ENCODE measurements at regions of chr7 and their contacts with region 1.

Region 1: DNA sequence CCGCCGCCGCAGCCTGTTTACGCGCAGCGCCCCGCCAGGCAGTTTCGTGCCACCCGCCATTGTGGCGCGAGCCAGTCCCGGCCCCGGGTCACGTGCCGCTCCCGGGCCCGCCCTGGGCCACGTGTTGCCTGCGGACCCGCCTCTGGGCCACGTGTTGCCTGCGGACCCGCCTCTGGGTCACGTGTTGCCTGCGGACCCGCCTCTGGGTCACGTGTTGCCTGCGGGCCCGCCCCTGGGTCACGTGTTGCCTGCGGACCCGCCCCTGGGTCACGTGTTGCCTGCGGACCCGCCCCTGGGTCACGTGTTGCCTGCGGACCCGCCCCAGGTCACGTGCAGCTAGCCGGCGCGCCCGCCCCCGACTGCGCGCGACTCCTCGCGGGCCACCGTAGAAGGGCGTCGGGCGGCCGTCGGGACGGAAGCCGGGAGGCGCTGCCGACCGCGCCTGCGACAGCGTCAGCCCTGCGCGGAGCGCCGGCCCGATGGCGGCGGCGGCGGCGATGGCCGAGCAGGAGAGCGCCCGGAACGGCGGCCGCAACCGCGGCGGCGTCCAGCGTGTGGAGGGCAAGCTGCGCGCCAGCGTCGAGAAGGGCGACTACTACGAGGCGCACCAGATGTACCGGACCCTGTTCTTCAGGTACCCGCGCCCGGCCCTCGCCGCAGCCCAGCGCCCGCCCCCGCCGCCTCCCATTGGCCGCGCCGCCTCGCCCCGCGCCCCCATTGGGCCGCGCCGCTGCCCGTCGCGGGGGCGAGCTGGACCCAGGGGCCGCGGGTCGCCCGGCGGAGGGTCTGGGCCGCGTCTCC is at the start of gene GET4:
- DNase-seq: peak; percentile 76 to 99
- H3K4me3 ChIP-seq: peak within 1 kb of the TSS; percentile 67
- H3K27ac ChIP-seq: peak within 1 kb of the TSS; percentile 49
- H3K4me1 ChIP-seq: peaks cover 20% of the 10 kb centered on the region
- H3K27me3 ChIP-seq: no peaks in the 10 kb centered on the region
- CTCF ChIP-seq: no peak
- total RNA-seq, gene GET4: 120 and 166 TPM in 2 replicates

Region 2: GRCh38 chr7:322111-322671 is 554.2 kb before region 1 on chr7:
- CTCF ChIA-PET with region 1: interaction called, 3 read pairs
- POLR2A ChIA-PET with region 1: interaction called, 3 read pairs
- intact Hi-C with region 1: loop called (anchors 5 kb)
- DNase-seq: peak; percentile 45 to 92
- H3K4me3 ChIP-seq: no peak overlapping the region
- H3K27ac ChIP-seq: no peak overlapping the region
- H3K4me1 ChIP-seq: peaks cover 20% of the 10 kb centered on the region
- H3K27me3 ChIP-seq: peaks cover 58% of the 10 kb centered on the region
- CTCF ChIP-seq: peak; percentile 83

Region 3: GRCh38 chr7:831596-832166 is 44.7 kb before region 1 on chr7:
- CTCF ChIA-PET with region 1: no interaction called
- POLR2A ChIA-PET with region 1: interaction called, 3 read pairs
- intact Hi-C with region 1: loop called (anchors 1 kb)
- DNase-seq: peak; percentile 58 to 93
- H3K4me3 ChIP-seq: peak overlapping the region; percentile 46; the same call in 1 of the 2 replicates
- H3K27ac ChIP-seq: peak overlapping the region; percentile 97
- H3K4me1 ChIP-seq: peaks cover 57% of the 10 kb centered on the region
- H3K27me3 ChIP-seq: no peaks in the 10 kb centered on the region
- CTCF ChIP-seq: no peak

Region 4: GRCh38 chr7:923108-924041 is 47.0 kb after region 1 on chr7:
- CTCF ChIA-PET with region 1: interaction called, 10 read pairs
- POLR2A ChIA-PET with region 1: no interaction called
- intact Hi-C with region 1: no loop called
- DNase-seq: peak in 1 of 2 experiments; percentile 84
- H3K4me3 ChIP-seq: no peak overlapping the region
- H3K27ac ChIP-seq: no peak overlapping the region
- H3K4me1 ChIP-seq: no peaks in the 10 kb centered on the region
- H3K27me3 ChIP-seq: no peaks in the 10 kb centered on the region
- CTCF ChIP-seq: no peak

Region 5: GRCh38 chr7:953547-954327 is 77.4 kb after region 1 on chr7:
- CTCF ChIA-PET with region 1: interaction called, 5 read pairs
- POLR2A ChIA-PET with region 1: no interaction called
- intact Hi-C with region 1: loop called (anchors 1 kb)
- DNase-seq: peak; percentile 57 to 83
- H3K4me3 ChIP-seq: peak overlapping the region; percentile 92
- H3K27ac ChIP-seq: no peak overlapping the region
- H3K4me1 ChIP-seq: peaks cover 37% of the 10 kb centered on the region
- H3K27me3 ChIP-seq: no peaks in the 10 kb centered on the region
- CTCF ChIP-seq: no peak

Region 6: GRCh38 chr7:1175967-1176851 is 299.8 kb after region 1 on chr7:
- CTCF ChIA-PET with region 1: no interaction called
- POLR2A ChIA-PET with region 1: no interaction called
- intact Hi-C with region 1: loop called (anchors 2 kb)
- DNase-seq: peak; percentile 71 to 94
- H3K4me3 ChIP-seq: peak overlapping the region; percentile 41; the same call in 1 of the 2 replicates
- H3K27ac ChIP-seq: no peak overlapping the region
- H3K4me1 ChIP-seq: peaks cover 11% of the 10 kb centered on the region
- H3K27me3 ChIP-seq: 0 out of 2 replicates have a peak, but pooled peaks cover 10% of the 10 kb centered on the region
- CTCF ChIP-seq: peak; percentile 99

Measured in PC-9 (cell line).